Heart right ventricle (tissue), 16 donors: ENCODE measurements at regions of chr3 and their contacts with region 1.

Region 1: DNA sequence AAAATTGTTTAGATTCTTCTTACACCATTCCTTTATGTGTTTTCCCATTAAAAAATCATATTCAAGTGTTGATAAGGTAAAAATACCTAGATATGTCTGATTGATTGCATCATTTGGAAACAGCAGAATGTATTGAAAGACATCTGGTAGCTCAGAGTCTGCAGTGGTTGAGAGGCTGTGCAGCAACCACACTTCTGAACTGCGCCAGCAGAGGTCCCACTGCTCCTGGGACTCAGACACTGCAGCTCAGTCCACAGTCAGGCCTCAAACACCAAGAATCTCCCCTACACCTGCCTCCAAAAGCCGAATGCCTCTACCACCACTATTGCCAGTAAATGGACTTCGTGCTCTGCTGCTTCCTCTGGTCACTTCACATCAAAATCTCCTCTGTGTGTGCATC is 176.9 kb upstream of the LMCD1 start:
- DNase-seq: peak; percentile 16 to 37
- ATAC-seq: peak in 7 of 8 donors; percentile 43 to 83 (median 69)
- H3K4me3 ChIP-seq: no peak overlapping the region
- H3K27ac ChIP-seq: no peak overlapping the region
- H3K4me1 ChIP-seq: peaks cover 0 to 7% (median 0%) of the 10 kb centered on the region in 9 donors
- H3K27me3 ChIP-seq: no peaks in the 10 kb centered on the region
- CTCF ChIP-seq: peak; percentile 13 to 62 (median 53)

Region 2: DNA sequence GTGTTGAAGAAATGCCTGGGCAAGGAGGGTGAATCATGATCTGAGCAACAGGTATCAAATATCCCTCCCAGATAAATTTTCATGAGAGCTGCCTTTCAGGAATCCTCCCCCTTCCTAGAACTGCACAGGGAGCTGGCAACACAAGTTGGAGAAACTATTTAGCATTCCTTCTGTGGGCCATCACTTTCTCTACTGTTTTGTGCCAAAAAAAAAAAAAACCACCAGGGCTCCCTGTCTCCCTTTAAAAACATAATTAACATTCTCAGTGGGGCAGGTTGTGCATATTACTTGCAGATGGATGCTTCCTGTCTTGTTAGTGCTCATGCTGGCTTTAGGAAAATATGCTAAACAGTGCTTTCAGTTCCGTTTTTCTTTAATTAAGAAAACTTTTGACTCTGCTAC is 58.0 kb before region 1 on chr3:
- intact Hi-C with region 1: no loop called
- DNase-seq: no peak
- ATAC-seq: no peak
- H3K4me3 ChIP-seq: no peak overlapping the region
- H3K27ac ChIP-seq: no peak overlapping the region
- H3K4me1 ChIP-seq: no peaks in the 10 kb centered on the region
- H3K27me3 ChIP-seq: no peaks in the 10 kb centered on the region
- CTCF ChIP-seq: no peak

Region 3: GRCh38 chr3:8416965-8417364 is 92.2 kb after region 1 on chr3:
- intact Hi-C with region 1: loop called in 8 of 10 experiments (anchors 2 to 5 kb)
- DNase-seq: no peak
- ATAC-seq: no peak
- H3K4me3 ChIP-seq: peak overlapping the region in 1 of 10 donors; percentile 8
- H3K27ac ChIP-seq: no peak overlapping the region
- H3K4me1 ChIP-seq: peaks cover 0 to 5% (median 0%) of the 10 kb centered on the region in 9 donors
- H3K27me3 ChIP-seq: no peaks in the 10 kb centered on the region
- CTCF ChIP-seq: no peak

Region 4: GRCh38 chr3:8607234-8608040 is 282.7 kb after region 1 on chr3:
- intact Hi-C with region 1: loop called in 1 of 10 experiments (anchors 10 kb)
- DNase-seq: peak; percentile 64 to 80
- ATAC-seq: peak; percentile 94 to 99 (median 97)
- H3K4me3 ChIP-seq: no peak overlapping the region
- H3K27ac ChIP-seq: peak overlapping the region in 1 of 10 donors; percentile 59
- H3K4me1 ChIP-seq: peaks cover 11 to 28% (median 17%) of the 10 kb centered on the region in 9 donors
- H3K27me3 ChIP-seq: no peaks in the 10 kb centered on the region
- CTCF ChIP-seq: peak; percentile 61 to 88 (median 79)

Region 5: GRCh38 chr3:8622873-8623691 is 298.3 kb after region 1 on chr3:
- intact Hi-C with region 1: loop called in 1 of 10 experiments (anchors 10 kb)
- DNase-seq: peak; percentile 61 to 74
- ATAC-seq: peak; percentile 82 to 92 (median 86)
- H3K4me3 ChIP-seq: peak overlapping the region in 2 of 10 donors; percentile 18
- H3K27ac ChIP-seq: no peak overlapping the region
- H3K4me1 ChIP-seq: peaks cover 6 to 20% (median 12%) of the 10 kb centered on the region in 9 donors
- H3K27me3 ChIP-seq: no peaks in the 10 kb centered on the region
- CTCF ChIP-seq: peak; percentile 75 to 94 (median 91)